ENCODE measurements at regions of chr20 and their contacts with region 1.

Region 1: DNA sequence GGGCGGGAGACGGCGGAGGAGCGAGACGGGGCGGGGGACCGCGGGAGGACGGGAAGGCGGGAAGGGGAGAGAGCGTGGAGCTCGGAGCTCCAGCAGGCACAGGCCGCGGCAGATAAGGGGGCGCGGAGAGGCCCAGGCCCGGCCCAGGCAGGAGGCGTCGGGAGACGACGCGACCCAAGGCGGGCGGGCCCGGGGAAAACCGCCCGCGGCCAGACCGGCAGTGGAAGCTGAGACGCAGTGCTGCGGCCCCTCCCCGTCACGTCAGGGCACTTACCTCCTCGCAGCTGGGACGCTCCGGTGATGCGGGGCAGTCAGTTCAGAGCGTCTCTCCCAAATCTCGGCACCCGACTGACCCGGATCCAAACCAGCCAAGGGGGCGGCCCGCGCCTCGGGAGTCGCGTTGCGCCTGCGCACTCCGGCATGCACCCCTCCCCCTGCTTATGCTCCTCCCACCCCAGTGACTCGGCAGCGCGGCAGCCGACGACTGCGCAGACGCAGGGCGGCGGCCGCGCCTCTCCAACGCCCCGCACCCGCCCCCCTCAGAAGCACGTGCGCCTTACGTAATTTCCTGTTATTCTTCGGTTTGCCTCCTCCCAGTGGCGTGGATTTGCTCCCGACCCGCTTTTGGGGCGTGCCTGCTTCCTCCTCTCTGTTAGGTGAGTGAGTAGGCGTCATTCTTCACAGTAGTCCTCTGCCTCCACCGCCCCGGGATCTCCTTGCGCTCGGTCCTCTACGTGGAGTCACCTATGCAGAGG is at the start of gene OSER1:
- DNase-seq: peak; percentile 99
- H3K4me3 ChIP-seq: peak within 1 kb of the TSS; percentile 74 to 96 (median 89)
- H3K27ac ChIP-seq: peak within 1 kb of the TSS; percentile 93 to 100 (median 98)
- H3K4me1 ChIP-seq: peaks cover 0 to 60% (median 45%) of the 10 kb centered on the region in 4 donors
- H3K27me3 ChIP-seq: no peaks in the 10 kb centered on the region
- CTCF ChIP-seq: no peak
- EP300 ChIP-seq: peak in 2 of 4 donors; percentile 33 to 94
- POLR2A ChIP-seq: peak; percentile 89 to 96
- total RNA-seq, gene OSER1: 47.4 to 90.5 (median 61.5) TPM

Region 2: GRCh38 chr20:44137210-44137801 is 73.3 kb before region 1 on chr20:
- intact Hi-C with region 1: no loop called
- DNase-seq: peak; percentile 94
- H3K4me3 ChIP-seq: peak overlapping the region in 2 of 4 donors; percentile 9 to 11
- H3K27ac ChIP-seq: peak overlapping the region; percentile 80 to 92 (median 92)
- H3K4me1 ChIP-seq: peaks cover 0 to 74% (median 68%) of the 10 kb centered on the region in 4 donors
- H3K27me3 ChIP-seq: no peaks in the 10 kb centered on the region
- CTCF ChIP-seq: no peak
- EP300 ChIP-seq: peak in 3 of 4 donors; percentile 34 to 79 (median 78)
- POLR2A ChIP-seq: no peak

Region 3: DNA sequence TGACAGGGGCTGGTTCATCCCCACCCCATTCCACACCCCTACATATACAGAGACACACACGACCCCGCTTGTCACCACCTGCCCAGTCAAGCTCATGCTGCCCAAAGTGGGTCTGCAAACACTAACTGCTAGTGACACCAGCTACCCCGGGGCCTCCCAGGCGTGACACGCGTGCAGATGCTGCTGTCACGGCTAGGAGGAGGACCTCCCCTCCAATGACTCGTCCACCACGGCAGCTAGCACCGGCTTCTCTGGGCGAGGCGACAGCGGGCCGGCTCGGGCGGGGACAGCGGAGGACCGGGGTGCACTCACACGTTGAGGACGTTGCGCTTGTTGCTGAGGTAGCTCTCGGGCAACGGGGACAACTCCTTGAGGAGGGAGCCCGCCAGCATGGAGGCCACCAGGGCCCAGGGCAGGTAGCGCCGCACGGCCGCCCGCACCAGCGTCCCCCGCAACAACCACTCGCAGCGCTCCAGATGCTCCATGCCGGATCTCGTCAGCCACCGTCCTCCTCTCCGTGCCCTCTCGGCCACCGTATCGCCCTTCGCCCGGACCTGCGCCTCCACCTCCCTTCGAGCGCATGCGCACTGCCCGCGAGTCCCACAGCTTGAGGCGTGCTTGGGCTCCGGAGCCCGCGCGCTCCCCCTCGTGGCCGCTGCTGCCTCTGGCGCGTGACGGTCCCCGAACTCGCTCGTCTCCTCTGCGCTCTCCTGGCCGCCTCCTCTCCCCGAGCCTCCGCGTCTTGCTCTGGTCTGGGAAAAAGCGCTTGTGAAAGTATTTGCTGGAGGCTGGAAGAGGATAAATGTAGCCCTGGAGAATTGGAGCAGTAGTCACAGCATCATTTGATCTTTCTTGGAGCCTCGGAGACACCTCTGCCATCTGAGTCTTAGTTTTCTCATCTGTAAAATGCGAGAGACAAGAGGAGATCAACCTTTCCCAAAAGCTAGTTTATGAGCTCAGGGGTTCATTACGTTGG is 100.4 kb after region 1 on chr20 and contains the start of gene FITM2:
- intact Hi-C with region 1: loop called (anchors 1 kb)
- DNase-seq: peak; percentile 99
- H3K4me3 ChIP-seq: peak within 1 kb of the TSS; percentile 84 to 98 (median 92)
- H3K27ac ChIP-seq: peak within 1 kb of the TSS; percentile 76 to 80 (median 79)
- H3K4me1 ChIP-seq: peaks cover 0 to 19% (median 17%) of the 10 kb centered on the region in 4 donors
- H3K27me3 ChIP-seq: no peaks in the 10 kb centered on the region
- CTCF ChIP-seq: peak; percentile 86 to 92 (median 86)
- EP300 ChIP-seq: no peak
- POLR2A ChIP-seq: no peak
- total RNA-seq, gene FITM2: 6.1 to 9.1 (median 7.4) TPM

Region 4: GRCh38 chr20:44475694-44476560 is 265.3 kb after region 1 on chr20 and contains the start of gene TTPAL:
- intact Hi-C with region 1: loop called (anchors 10 kb)
- DNase-seq: peak; percentile 95
- H3K4me3 ChIP-seq: peak within 1 kb of the TSS; percentile 60 to 83 (median 76)
- H3K27ac ChIP-seq: peak within 1 kb of the TSS; percentile 86 to 94 (median 92)
- H3K4me1 ChIP-seq: peaks cover 0 to 20% (median 14%) of the 10 kb centered on the region in 4 donors
- H3K27me3 ChIP-seq: peaks cover 0 to 3% (median 0%) of the 10 kb centered on the region in 3 donors
- CTCF ChIP-seq: peak in 2 of 4 experiments; percentile 10 to 41
- EP300 ChIP-seq: no peak
- POLR2A ChIP-seq: peak; percentile 95 to 99
- total RNA-seq, gene TTPAL: 7.2 to 10.0 (median 8.3) TPM

Region 5: DNA sequence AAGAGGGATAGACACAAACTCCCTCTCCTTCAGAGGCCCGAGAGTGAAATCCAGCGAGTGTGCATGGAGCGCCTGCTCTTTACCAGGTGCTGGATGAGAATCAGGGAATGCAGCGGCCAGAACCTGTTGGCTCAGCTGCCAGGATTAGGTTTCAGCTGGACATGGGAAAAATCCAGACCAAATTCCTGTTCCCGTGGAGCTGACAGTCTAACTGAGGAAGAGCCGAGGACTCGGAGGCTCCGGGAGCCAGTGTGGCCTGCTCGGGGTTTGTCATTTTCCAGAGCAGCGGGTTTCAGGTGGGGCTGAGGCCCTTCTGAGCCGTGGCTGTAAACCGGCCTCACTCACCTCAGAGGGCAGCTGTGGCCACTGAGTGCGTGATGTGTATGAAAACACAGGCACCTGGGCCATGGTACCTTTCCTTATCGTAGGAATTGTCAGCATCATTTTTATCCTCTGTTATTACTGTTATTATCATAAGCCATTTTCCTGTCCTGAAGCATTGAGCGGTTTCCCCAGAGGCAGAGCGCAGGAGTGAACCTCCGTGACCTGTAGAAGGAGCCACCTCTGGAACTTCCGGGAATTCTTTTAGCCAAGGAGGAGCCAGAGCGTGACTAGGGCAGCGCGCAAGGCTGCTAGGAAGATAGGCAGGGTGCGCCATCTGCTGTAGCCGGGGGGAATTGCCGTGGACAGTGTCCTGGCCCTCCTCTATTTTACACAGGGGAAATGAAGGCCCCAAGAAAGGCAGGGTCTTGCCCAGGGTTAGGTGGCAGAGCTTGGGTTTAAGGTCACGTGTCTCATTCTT is 399.1 kb after region 1 on chr20:
- intact Hi-C with region 1: loop called (anchors 2 kb)
- DNase-seq: peak; percentile 94
- H3K4me3 ChIP-seq: peak overlapping the region; percentile 9 to 38 (median 25)
- H3K27ac ChIP-seq: peak overlapping the region; percentile 83 to 95 (median 90)
- H3K4me1 ChIP-seq: peaks cover 0 to 47% (median 42%) of the 10 kb centered on the region in 4 donors
- H3K27me3 ChIP-seq: no peaks in the 10 kb centered on the region
- CTCF ChIP-seq: peak; percentile 97 to 98 (median 98)
- EP300 ChIP-seq: no peak
- POLR2A ChIP-seq: no peak

Region 6: GRCh38 chr20:44733341-44734069 is 522.9 kb after region 1 on chr20:
- intact Hi-C with region 1: loop called (anchors 10 kb)
- DNase-seq: peak; percentile 86
- H3K4me3 ChIP-seq: no peak overlapping the region
- H3K27ac ChIP-seq: no peak overlapping the region
- H3K4me1 ChIP-seq: peaks cover 0 to 39% (median 23%) of the 10 kb centered on the region in 4 donors
- H3K27me3 ChIP-seq: no peaks in the 10 kb centered on the region
- CTCF ChIP-seq: peak; percentile 87 to 91 (median 87)
- EP300 ChIP-seq: no peak
- POLR2A ChIP-seq: no peak

Measured in sigmoid colon (tissue), 7 donors.